SK-N-SH (cell line): ENCODE measurements at regions of chr11 and their contacts with region 1.

Region 1: DNA sequence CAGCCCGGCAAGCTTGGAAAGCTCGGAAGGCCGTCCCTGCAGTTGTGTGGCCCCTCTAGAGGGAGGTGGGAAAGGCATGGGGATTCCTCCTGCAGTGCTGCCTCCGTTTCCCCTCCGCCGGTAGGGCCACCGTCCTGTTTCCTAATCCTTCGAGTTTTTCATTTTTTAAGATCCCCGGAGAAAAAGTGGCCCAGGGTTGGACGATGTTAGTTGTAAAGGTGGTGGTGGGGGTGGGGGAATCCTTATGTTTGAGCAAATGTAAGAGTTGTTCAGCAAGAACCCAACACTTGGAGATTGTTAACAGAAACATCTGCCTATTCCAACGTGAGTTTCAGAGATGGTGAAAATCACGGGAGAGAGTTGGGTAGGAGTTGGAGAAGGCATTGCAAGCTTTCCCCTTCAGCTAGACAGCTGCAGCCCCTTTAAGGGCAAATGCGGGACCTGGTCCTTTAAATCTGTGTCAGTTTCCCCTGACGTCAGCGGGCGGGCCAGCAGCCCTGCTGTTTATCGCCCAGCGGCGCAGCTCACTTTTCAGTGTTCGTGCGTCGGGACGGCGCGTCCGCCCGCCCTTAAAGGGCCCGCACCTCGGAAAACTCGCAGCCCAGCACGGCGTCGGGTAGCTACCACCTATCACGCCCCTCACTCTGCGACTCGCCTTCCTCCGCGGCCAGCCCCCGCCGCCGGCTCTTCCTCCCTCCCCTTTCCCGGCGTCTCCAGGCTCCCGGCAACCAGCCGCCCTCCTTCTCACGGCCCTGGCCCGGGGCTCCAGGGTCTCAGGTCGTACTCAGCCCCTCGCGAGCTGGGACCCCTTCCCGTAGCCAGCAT is at the start of gene SIDT2:
- DNase-seq: peak; percentile 92
- H3K4me3 ChIP-seq: peak within 1 kb of the TSS; percentile 76 to 77
- H3K27ac ChIP-seq: peak within 1 kb of the TSS; percentile 42 to 82
- H3K4me1 ChIP-seq: peaks cover 10 to 21% of the 10 kb centered on the region in 2 experiments; a peak in 2 of 4 replicates
- H3K27me3 ChIP-seq: no peaks in the 10 kb centered on the region
- CTCF ChIP-seq: no peak
- EP300 ChIP-seq: peak in 1 of 2 experiments; percentile 21; a peak in 1 of 4 replicates
- RAD21 ChIP-seq: no peak
- polyA plus RNA-seq, gene SIDT2: 17.3 and 17.5 TPM in 2 replicates

Region 2: DNA sequence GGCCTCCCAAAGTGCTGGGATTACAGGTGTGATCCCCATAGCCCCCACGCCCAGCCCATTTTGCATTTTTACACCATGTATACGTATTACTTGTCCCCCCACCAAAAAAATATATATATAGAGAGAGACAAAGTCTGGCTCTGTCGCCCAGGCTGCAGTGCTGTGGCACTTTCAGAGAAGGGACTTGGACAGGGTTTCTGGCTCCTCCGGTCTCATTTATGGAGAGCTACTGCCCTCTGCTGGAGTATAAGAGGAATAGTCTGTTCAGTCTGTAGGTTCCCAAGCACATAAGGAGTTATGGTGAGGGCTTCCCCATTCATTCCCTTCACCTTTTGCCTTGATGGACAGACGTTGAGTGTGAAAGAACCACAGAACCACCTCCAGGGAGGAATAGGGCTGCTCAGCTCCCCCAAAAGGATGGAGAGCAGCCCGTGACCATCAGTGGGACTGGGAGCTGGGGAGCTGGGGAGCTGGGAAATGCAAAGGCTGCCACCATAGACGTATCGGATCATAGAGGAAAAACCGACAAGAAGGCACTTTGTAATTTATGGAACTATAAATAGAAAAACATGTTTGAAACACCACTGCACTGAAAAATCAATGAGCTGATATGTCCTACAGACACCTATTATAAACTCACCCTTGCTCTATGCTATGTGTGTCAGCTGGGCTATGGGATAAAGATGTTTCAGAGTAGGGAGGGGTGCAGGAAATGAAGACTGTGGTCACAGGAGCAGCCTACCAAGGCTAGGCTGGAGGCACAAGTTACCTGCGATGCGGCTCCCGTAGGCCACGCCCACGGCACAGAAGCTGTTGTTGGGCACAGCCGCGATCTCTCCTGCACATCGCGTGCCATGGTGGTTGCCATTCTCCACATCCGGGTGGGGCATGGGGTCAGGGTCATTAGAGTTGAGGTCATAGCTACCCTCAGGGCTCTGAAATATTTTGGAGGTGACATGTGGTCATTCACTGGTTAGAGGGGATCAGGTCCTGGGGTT is 48.3 kb after region 1 on chr11:
- CTCF ChIA-PET with region 1: interaction called, 54 read pairs
- POLR2A ChIA-PET with region 1: no interaction called
- DNase-seq: peak; percentile 84
- H3K4me3 ChIP-seq: no peak overlapping the region; a peak in 1 of 4 replicates
- H3K27ac ChIP-seq: no peak overlapping the region
- H3K4me1 ChIP-seq: peaks cover 14 to 16% of the 10 kb centered on the region in 2 experiments; a peak in 3 of 4 replicates
- H3K27me3 ChIP-seq: no peaks in the 10 kb centered on the region
- CTCF ChIP-seq: peak; percentile 79
- EP300 ChIP-seq: no peak
- RAD21 ChIP-seq: peak; percentile 90

Region 3: DNA sequence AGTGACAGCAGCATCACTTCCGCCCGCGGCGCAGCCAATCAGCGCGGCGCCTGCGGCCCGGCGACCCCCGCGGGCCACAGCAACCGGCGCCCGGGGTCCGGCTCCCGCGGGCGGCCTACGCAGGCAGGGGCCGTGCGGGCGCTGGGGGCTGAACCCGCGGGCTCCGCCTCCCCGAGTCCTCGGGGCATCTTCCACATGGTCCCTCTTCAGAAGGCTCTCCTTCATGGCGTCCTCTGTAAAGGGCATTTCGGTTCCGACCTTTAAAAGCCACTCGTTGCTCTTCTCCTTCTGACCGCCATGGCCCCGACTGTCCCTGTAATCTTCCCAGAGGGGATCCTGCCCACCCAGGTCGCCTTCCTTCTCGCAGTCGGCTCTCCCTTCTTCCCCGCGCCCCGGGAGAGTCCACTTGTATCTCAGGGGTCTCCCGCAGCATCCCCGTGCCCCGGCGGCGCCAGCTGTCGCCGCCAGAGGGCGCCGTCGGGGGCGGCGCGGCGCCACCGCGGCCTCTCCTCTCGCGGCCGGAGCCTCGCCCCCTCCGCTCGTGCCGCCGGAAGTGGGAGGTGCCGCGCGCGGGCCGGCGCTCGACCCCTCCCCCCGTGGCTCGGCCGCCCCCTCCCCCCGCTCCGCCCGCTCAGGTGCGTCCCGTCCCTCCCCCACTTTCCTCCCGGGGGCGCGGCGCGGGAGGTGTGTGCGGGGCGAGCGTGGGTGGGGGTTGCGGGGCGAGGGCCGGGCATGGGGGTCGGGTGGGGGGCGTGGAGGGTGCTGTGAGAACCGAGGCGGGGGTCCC is 53.9 kb after region 1 on chr11 and contains the start of gene RNF214:
- CTCF ChIA-PET with region 1: interaction called, 54 read pairs
- POLR2A ChIA-PET with region 1: no interaction called
- DNase-seq: peak; percentile 99
- H3K4me3 ChIP-seq: peak within 1 kb of the TSS; percentile 96 to 99
- H3K27ac ChIP-seq: peak within 1 kb of the TSS; percentile 83 to 93
- H3K4me1 ChIP-seq: peaks cover 9 to 22% of the 10 kb centered on the region in 2 experiments; a peak in 3 of 4 replicates
- H3K27me3 ChIP-seq: no peaks in the 10 kb centered on the region
- CTCF ChIP-seq: peak; percentile 89
- EP300 ChIP-seq: 0 out of 4 replicates have a peak, but pooled peaks of 1 of the 2 experiments have one; percentile 16
- RAD21 ChIP-seq: peak; percentile 28; the same call in 1 of the 2 replicates
- polyA plus RNA-seq, gene RNF214: 11.9 and 15.4 TPM in 2 replicates